Sciatic nerve (tissue), 2 donors: ENCODE measurements at regions of chr1 and their contacts with region 1.

Region 1: GRCh38 chr1:81335876-81336275 is 464.9 kb upstream of the ADGRL2 start:
- DNase-seq: no peak
- ATAC-seq: no peak

Region 2: GRCh38 chr1:79822053-79822452 is 1513.8 kb before region 1 on chr1:
- intact Hi-C with region 1: loop called (anchors 5 kb)
- DNase-seq: no peak
- ATAC-seq: peak; percentile 17

Region 3: DNA sequence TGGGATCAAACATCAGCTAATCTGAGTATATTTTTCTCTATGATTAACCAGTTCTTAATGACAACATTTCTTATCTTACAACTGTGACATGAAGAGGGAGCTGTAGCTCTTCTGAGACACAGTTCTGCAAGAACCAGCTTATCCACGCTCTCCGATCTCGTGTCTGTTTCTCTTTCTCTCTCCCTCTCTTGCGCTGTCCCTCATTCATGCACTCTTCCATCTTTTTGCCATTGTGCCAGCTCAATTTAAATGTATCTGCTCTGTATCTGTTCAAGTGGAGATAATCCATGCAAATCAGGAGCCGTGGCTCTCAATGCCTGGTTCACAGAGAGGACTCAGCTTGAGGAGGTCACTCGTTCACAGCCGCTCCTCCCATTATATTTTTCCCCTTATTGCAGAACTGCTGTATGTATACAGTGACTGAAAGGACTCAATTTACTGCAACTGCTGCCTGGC is 29.9 kb before region 1 on chr1:
- intact Hi-C with region 1: no loop called
- DNase-seq: no peak
- ATAC-seq: peak; percentile 90